B cell (primary cell): ENCODE measurements at regions of chrX and their contacts with region 1.

Region 1: GRCh38 chrX:106999002-106999975 is 723 bp downstream of the MORC4 start:
- DNase-seq: peak; percentile 61
- ATAC-seq: peak; percentile 39
- H3K4me3 ChIP-seq: peak overlapping the region in 4 of 5 experiments; percentile 42 to 67 (median 54)
- H3K4me3 Mint-ChIP-seq: peak overlapping the region; percentile 81
- H3K27ac ChIP-seq: no peak overlapping the region
- H3K27ac Mint-ChIP-seq: peak overlapping the region; percentile 64
- H3K4me1 ChIP-seq: peaks cover 3 to 7% of the 10 kb centered on the region in 2 donors
- H3K4me1 Mint-ChIP-seq: peaks cover 4% of the 10 kb centered on the region
- H3K27me3 ChIP-seq: no peaks in the 10 kb centered on the region
- H3K27me3 Mint-ChIP-seq: no peaks in the 10 kb centered on the region
- CTCF ChIP-seq: peak; percentile 33

Region 2: GRCh38 chrX:106874075-106874474 is 125.2 kb before region 1 on chrX:
- CTCF ChIA-PET with region 1: no interaction called
- POLR2A ChIA-PET with region 1: no interaction called
- intact Hi-C with region 1: no loop called
- DNase-seq: peak; percentile 23
- ATAC-seq: no peak
- H3K4me3 ChIP-seq: no peak overlapping the region
- H3K4me3 Mint-ChIP-seq: no peak overlapping the region
- H3K27ac ChIP-seq: no peak overlapping the region
- H3K27ac Mint-ChIP-seq: no peak overlapping the region
- H3K4me1 ChIP-seq: no peaks in the 10 kb centered on the region
- H3K4me1 Mint-ChIP-seq: no peaks in the 10 kb centered on the region
- H3K27me3 ChIP-seq: peaks cover 0 to under 1% (median 0%) of the 10 kb centered on the region in 4 experiments
- H3K27me3 Mint-ChIP-seq: no peaks in the 10 kb centered on the region
- CTCF ChIP-seq: peak; percentile 67

Region 3: GRCh38 chrX:106948636-106949035 is 50.7 kb before region 1 on chrX:
- CTCF ChIA-PET with region 1: no interaction called
- POLR2A ChIA-PET with region 1: no interaction called
- intact Hi-C with region 1: no loop called
- DNase-seq: no peak
- ATAC-seq: no peak
- H3K4me3 ChIP-seq: no peak overlapping the region
- H3K4me3 Mint-ChIP-seq: no peak overlapping the region
- H3K27ac ChIP-seq: no peak overlapping the region
- H3K27ac Mint-ChIP-seq: no peak overlapping the region
- H3K4me1 ChIP-seq: no peaks in the 10 kb centered on the region
- H3K4me1 Mint-ChIP-seq: no peaks in the 10 kb centered on the region
- H3K27me3 ChIP-seq: no peaks in the 10 kb centered on the region
- H3K27me3 Mint-ChIP-seq: no peaks in the 10 kb centered on the region
- CTCF ChIP-seq: no peak

Region 4: DNA sequence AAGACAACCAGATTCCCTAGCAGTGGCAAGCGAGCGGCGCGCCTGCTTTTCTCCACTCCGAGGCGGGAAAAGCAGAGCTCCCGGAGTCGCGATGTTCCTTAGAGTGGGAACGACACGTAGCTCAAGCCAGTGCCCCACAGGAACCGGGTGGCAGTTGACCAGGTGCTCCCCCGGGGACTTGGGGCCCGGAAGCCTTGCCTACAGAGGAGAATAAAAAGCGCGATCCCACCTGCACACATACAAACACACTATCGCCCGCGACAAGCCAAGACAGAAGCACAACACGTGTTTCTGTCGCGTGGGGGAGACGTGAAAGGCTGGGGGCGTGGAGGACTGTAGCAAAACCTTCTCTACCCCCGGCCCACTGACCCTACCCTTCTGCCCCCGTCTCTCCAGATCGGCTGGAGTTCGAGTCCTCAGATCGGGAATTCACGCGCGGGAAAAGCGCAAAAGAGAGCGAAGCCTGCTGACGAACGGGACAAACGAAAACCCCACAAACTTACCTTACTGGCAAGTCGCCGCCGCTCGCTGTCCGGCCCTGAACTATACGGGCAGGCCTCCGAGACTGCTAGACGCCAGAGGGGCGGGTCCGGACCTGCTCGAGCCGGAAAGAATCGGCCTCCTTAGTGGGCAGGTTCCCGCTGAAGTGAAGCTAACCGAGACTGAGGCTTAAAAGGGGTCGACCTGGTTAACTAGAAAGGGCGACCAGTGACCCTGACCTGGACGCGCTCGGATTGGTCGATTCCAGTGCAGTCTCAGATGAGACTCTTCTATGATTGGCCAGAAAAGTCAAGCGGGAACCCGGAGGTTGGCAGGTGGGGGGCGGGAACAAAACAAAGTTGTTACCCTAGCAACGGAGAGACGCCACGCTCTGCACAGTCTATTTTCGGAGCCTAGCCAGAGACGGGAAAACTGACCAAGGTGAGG is 206.7 kb after region 1 on chrX and contains the starts of genes DNAAF6 and NUP62CL:
- CTCF ChIA-PET with region 1: no interaction called
- POLR2A ChIA-PET with region 1: no interaction called
- intact Hi-C with region 1: no loop called
- DNase-seq: peak; percentile 80
- ATAC-seq: peak; percentile 95
- H3K4me3 ChIP-seq: peak within 1 kb of the TSS; percentile 9 to 69 (median 53)
- H3K4me3 Mint-ChIP-seq: peak within 1 kb of the TSS; percentile 95
- H3K27ac ChIP-seq: peak within 1 kb of the TSS; percentile 7 to 30
- H3K27ac Mint-ChIP-seq: peak within 1 kb of the TSS; percentile 72
- H3K4me1 ChIP-seq: peaks cover 3 to 4% of the 10 kb centered on the region in 2 donors
- H3K4me1 Mint-ChIP-seq: peaks cover 9% of the 10 kb centered on the region
- H3K27me3 ChIP-seq: no peaks in the 10 kb centered on the region
- H3K27me3 Mint-ChIP-seq: no peaks in the 10 kb centered on the region
- CTCF ChIP-seq: no peak
- total RNA-seq, gene DNAAF6: not detected in 2 replicates
- total RNA-seq, gene NUP62CL: 3.2 and 3.3 TPM in 2 replicates

Region 5: GRCh38 chrX:107429090-107429489 is 429.8 kb after region 1 on chrX:
- CTCF ChIA-PET with region 1: interaction called, 11 read pairs
- POLR2A ChIA-PET with region 1: no interaction called
- intact Hi-C with region 1: loop called (anchors 2 kb)
- DNase-seq: peak; percentile 31
- ATAC-seq: no peak
- H3K4me3 ChIP-seq: no peak overlapping the region
- H3K4me3 Mint-ChIP-seq: no peak overlapping the region
- H3K27ac ChIP-seq: no peak overlapping the region
- H3K27ac Mint-ChIP-seq: no peak overlapping the region
- H3K4me1 ChIP-seq: no peaks in the 10 kb centered on the region
- H3K4me1 Mint-ChIP-seq: no peaks in the 10 kb centered on the region
- H3K27me3 ChIP-seq: no peaks in the 10 kb centered on the region
- H3K27me3 Mint-ChIP-seq: no peaks in the 10 kb centered on the region
- CTCF ChIP-seq: peak; percentile 50